ENCODE measurements at regions of chr19 and their contacts with region 1.

Region 1: DNA sequence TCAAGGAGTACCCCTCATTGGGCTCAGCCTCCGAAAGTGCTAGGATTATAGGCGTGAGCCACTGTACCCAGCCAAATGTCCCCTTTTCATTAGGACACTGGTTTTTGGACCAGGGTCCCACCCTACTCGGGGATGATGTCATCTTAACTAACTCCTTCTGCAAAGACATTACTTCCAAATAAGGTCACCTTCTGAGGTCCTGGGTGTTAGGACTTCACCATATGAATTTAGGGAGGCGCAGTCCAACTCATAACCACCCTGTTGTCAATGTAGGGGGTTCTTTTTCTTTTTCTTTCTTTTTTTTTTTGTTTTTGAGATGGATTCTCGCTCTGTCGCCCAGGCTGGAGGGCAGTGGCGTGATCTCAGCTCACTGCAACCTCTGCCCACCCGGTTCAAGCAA is 32.7 kb upstream of the NFIC start:
- DNase-seq: no peak
- H3K4me3 ChIP-seq: no peak overlapping the region
- H3K27ac ChIP-seq: no peak overlapping the region
- H3K4me1 ChIP-seq: peaks cover 4 to 36% (median 29%) of the 10 kb centered on the region in 6 donors
- H3K27me3 ChIP-seq: peaks cover 0 to 19% (median 0%) of the 10 kb centered on the region in 7 donors
- CTCF ChIP-seq: no peak
- POLR2A ChIP-seq: no peak

Region 2: DNA sequence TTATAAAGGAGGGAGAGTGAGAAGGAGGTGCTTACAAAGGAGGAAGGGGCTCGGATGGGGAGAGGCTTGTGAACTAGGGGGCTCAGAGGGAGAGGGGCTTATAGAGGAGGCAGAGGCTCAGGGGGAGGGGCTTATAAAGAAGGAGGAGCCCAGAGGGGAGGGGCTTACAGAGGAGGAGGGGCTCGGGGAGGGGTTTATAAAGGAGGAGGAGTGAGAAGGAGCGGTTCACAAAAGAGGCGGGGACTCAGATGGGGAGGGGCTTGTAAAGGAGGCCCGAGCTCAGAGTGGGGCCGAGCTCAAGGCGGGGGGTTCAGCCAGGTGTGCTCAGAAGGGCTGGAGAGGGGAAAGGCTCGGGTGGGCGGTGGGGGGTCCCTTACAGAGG is 146.2 kb after region 1 on chr19:
- intact Hi-C with region 1: loop called (anchors 5 kb)
- DNase-seq: no peak
- H3K4me3 ChIP-seq: no peak overlapping the region
- H3K27ac ChIP-seq: no peak overlapping the region
- H3K4me1 ChIP-seq: peaks cover 0 to 16% (median 7%) of the 10 kb centered on the region in 6 donors
- H3K27me3 ChIP-seq: peaks cover 0 to 69% (median 28%) of the 10 kb centered on the region in 7 donors
- CTCF ChIP-seq: no peak
- POLR2A ChIP-seq: no peak